ENCODE measurements at regions of chr1 and their contacts with region 1.

Region 1: DNA sequence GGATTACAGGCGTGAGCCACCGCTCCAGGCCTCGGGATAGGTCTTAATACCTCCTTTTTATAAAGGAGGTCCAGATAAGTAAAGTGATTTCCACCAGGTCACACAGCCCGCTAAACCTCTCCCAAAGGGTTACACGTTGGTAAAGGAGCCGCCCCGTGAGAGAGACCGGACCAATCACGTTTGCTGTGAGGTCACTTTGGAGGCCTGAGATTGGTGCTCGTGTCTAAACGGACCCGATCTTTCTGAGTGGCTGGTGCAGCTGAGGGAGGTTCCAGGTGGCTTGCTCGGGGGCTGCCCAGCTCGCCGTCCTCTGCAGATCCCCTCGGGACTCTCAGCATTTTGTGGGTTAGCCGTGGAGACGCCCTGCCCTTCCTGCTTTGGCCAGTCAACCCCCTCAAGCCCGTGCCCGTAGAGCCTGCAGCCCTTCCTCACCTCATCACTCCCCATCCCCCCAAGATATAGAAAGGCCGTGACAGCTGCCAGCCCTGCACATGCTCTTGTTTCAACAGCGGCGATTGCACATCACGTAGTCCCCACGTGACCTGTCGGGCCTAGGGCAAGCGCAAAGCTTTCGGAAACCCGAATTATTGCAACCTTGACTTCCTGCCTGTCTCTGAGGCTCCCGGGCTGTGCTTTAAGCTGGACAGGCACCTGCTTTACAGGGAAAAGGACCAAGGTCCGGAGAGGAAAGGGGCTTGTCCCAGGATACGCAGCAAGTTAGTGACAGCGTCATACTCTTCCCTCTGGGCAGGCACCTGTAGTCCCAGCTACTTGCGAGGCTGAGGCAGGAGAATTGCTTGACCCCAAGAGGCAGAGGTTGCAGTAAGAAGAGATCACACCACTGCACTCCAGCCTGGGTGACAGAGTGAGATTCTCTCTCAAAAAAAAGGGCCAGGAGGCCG is 5.0 kb upstream of the COA7 start:
- DNase-seq: peak; percentile 86

Region 2: GRCh38 chr1:52726265-52727113 is 23.4 kb after region 1 on chr1 and contains the start of gene ZYG11B:
- CTCF ChIA-PET with region 1: no interaction called
- POLR2A ChIA-PET with region 1: interaction called, 22 read pairs
- DNase-seq: peak; percentile 96

Region 3: DNA sequence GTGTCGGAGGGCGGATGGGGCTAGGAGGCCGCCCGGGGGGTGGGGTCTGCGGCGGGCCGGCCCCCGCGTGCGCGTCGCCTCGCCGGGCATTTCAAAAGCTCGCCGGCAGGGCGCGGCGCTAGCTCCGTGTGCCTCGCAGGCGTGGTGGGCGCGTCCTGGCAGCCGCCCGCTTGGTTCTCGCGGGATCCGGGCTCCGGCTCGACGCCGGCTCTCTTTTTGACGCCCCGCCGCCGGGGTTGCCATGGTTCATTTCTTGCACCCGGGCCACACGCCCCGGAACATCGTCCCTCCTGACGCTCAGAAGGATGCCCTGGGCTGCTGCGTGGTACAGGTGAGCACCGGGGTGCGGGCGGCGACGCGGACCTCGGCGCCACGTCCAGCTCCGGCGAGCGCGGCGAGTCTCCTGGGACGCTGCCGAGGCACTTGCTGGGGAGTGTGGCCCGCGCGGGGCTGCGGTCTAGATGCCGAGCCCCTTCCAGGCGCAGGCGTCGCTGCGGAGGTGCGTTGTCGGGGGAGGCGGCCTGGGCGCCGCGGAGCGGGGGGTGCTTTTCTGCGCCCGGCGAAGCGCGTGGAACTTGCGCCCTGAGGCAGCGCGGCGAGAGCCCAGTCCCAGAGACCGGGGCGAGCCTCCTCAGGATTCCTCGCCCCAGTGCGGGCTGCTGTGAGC is 139.6 kb after region 1 on chr1 and contains the start of gene ZYG11A:
- CTCF ChIA-PET with region 1: no interaction called
- POLR2A ChIA-PET with region 1: interaction called, 20 read pairs
- DNase-seq: peak; percentile 90

Measured in HEK293T (cell line).